ENCODE measurements at regions of chr19 and their contacts with region 1.

Region 1: DNA sequence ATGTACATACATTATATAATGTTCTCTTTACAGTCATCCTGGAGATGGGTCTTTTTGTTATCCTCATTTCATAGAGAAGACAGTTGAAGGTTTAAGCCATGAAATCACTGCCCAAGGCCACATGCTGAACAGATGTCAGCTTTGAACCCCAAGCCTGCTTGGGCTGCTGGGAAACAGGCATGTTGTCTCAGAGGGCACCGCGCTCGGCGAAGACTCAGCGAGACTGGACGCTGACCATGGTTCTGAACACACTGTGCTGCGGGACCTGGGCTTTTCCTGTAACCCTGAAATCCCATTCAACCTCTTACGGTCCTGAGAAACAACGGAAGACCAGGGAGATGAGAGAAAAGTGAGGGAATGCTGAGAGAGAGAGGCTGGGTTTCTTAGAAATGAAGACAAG is 27.3 kb downstream of the LRFN3 start:
- DNase-seq: peak; percentile 34
- H3K4me3 Mint-ChIP-seq: no peak overlapping the region
- H3K27ac Mint-ChIP-seq: no peak overlapping the region
- H3K4me1 Mint-ChIP-seq: peaks cover 3% of the 10 kb centered on the region
- H3K27me3 Mint-ChIP-seq: peaks cover 13% of the 10 kb centered on the region

Region 2: GRCh38 chr19:35975608-35976214 is 12.2 kb after region 1 on chr19:
- intact Hi-C with region 1: loop called (anchors 1 kb)
- DNase-seq: no peak
- H3K4me3 Mint-ChIP-seq: no peak overlapping the region
- H3K27ac Mint-ChIP-seq: no peak overlapping the region
- H3K4me1 Mint-ChIP-seq: no peaks in the 10 kb centered on the region
- H3K27me3 Mint-ChIP-seq: peaks cover 9% of the 10 kb centered on the region

Region 3: GRCh38 chr19:36081385-36081784 is 117.9 kb after region 1 on chr19:
- intact Hi-C with region 1: no loop called
- DNase-seq: no peak
- H3K4me3 Mint-ChIP-seq: no peak overlapping the region
- H3K27ac Mint-ChIP-seq: no peak overlapping the region
- H3K4me1 Mint-ChIP-seq: no peaks in the 10 kb centered on the region
- H3K27me3 Mint-ChIP-seq: no peaks in the 10 kb centered on the region

Measured in activated T-helper 1 cell treated with anti-CD3 and anti-CD28 coated beads, Interleukin-12 subunit alpha, Interleukin-12 subunit beta, Interleukin-2, Interleukin-4 antibody, amounts not matched to agents 30 ng/mL and 10 ng/mL and 1 ng/mL, durations not matched to agents 14 hours and 24 hours and 36 hours (primary cell).